ENCODE measurements at regions of chr10 and their contacts with region 1.

Region 1: GRCh38 chr10:131786756-131787605 is 113.8 kb upstream of the PPP2R2D start:
- DNase-seq: no peak
- ATAC-seq: no peak
- H3K4me3 ChIP-seq: no peak overlapping the region
- H3K27ac ChIP-seq: no peak overlapping the region
- H3K4me1 ChIP-seq: no peaks in the 10 kb centered on the region
- H3K27me3 ChIP-seq: no peaks in the 10 kb centered on the region

Region 2: GRCh38 chr10:130179640-130180039 is 1607.3 kb before region 1 on chr10:
- intact Hi-C with region 1: loop called in 1 of 2 experiments (anchors 10 kb)
- DNase-seq: no peak
- ATAC-seq: peak; percentile 52
- H3K4me3 ChIP-seq: no peak overlapping the region
- H3K27ac ChIP-seq: no peak overlapping the region
- H3K4me1 ChIP-seq: no peaks in the 10 kb centered on the region
- H3K27me3 ChIP-seq: no peaks in the 10 kb centered on the region

Region 3: DNA sequence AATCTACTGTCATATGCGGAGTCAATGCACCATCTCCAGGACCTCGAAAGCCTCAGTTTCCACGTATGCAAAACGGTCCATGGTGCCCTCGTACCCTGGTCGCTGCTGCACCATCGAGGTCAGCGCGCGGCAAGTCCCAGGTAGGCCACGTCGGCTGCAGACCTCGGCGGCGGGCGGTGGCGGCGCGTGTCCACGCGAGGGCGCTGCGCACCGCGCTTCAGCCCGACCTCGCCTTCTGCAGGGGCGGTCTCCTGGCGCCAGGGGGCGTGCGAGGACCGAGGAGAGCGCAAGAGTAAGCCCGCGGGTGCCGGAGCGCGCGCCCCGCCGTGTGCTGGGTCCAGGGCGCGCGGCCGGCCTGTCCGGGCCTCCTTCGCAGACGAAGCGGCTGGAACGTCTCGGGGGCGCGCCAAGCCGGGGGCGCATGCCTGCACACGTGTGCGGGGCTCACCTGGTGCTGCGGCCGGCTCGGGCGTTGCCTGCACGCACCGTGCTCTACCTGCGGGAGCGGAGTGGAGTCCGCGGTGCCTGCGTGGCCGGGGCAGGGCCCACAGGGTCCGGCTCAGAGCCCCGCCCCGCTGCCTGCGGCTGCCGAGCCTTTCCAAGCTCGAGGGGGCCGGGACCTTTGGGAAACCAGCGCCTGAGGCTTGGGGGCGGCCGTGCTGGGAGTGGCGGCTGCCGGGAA is 1596.8 kb before region 1 on chr10:
- intact Hi-C with region 1: loop called (anchors 5 to 10 kb)
- DNase-seq: peak; percentile 91 to 97
- ATAC-seq: peak; percentile 93
- H3K4me3 ChIP-seq: peak overlapping the region; percentile 9 to 23
- H3K27ac ChIP-seq: no peak overlapping the region
- H3K4me1 ChIP-seq: no peaks in the 10 kb centered on the region
- H3K27me3 ChIP-seq: no peaks in the 10 kb centered on the region

Region 4: DNA sequence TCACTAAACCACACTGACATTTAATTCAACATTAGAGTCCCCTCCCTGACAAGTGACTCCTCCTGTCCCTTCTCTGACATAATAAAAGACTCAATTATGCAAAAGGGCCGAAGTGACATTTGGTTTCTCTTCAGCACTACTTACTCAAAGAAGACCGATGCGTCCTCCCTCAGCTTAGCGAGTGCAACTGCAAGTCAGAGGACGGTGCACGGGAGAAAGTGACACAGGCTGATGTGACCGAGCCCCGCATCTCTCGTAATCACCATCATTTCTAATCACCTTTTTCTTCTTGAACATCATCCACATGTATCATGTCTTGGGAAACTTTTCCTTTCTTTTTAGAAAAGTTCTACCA is 631.1 kb before region 1 on chr10:
- intact Hi-C with region 1: no loop called
- DNase-seq: peak in 1 of 2 donors; percentile 67
- ATAC-seq: no peak
- H3K4me3 ChIP-seq: no peak overlapping the region
- H3K27ac ChIP-seq: no peak overlapping the region
- H3K4me1 ChIP-seq: no peaks in the 10 kb centered on the region
- H3K27me3 ChIP-seq: no peaks in the 10 kb centered on the region

Measured in aorta (tissue), 5 donors.